ENCODE measurements at regions of chr22 and their contacts with region 1.

Region 1: DNA sequence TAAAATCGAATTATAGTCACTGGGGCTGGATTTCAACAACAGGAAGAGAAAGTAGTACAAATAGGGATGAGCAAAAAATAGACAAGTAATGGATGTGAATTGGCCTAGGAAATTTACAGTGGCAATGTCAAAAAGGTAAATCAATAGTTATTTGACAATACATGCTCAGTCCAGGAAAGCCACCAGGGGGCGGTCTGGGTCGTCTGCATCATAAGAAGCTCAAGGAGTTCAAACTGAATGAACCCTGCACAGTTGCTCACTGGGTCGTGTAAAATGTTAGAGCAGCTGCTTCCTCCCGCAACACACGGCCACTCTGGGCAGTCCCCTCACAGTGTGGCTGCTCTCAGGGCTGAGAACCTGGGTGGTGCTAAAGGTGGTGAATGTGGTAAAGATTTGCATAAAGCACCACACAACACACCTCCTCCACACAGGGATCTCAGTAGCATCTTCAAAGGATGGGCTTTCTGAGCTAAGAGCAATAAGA is 85.9 kb downstream of the ZNF280B start:
- DNase-seq: peak; percentile 71

Region 2: GRCh38 chr22:22380098-22381030 is 42.3 kb before region 1 on chr22:
- CTCF ChIA-PET with region 1: interaction called, 14 read pairs
- POLR2A ChIA-PET with region 1: no interaction called
- DNase-seq: peak; percentile 74

Region 3: DNA sequence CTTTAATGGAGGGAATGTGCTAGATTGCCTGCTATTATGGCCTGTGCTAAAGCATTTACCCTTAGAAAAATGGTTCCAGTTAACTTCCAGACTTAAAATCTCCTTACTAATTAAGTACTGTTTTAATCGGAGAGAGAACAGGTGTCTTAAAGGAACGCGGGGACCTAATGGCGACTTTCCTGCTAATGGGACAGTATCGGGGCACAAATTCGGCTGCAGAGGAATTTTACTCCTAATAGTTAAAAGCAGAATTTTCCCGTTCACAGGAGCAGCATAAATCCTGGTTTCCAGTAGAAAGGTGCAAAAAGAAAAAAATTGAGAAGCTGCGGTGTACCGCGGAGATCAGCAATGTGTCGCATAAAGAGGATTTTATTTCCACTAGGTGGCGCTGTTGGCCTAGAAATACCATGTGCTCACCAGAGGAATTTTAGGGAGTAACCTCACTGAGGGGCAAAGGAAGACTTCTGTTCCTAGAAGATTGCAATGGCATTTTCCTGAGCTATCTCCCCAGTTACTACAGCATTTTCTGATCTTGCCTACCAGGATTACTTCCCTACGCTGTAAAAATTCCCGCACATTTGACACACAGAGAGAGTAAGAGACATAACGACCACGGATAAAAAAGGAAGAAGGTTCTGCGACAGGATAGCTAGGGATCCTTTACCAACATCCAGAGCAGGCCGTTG is 41.3 kb after region 1 on chr22:
- CTCF ChIA-PET with region 1: interaction called, 11 read pairs
- POLR2A ChIA-PET with region 1: no interaction called
- DNase-seq: peak; percentile 83

Region 4: GRCh38 chr22:22520667-22521602 is 98.3 kb after region 1 on chr22:
- CTCF ChIA-PET with region 1: no interaction called
- POLR2A ChIA-PET with region 1: no interaction called
- DNase-seq: no peak